ENCODE measurements at regions of chr1 and their contacts with region 1.

Region 1: GRCh38 chr1:200510228-200510623 is 100.4 kb upstream of the ZNF281 start:
- DNase-seq: peak; percentile 59 to 66 (median 63)
- H3K4me3 ChIP-seq: no peak overlapping the region
- H3K4me3 Mint-ChIP-seq: no peak overlapping the region
- H3K27ac ChIP-seq: no peak overlapping the region
- H3K27ac Mint-ChIP-seq: peak overlapping the region in 1 of 7 donors; percentile 37
- H3K4me1 ChIP-seq: no peaks in the 10 kb centered on the region
- H3K4me1 Mint-ChIP-seq: peaks cover 0 to 3% (median 0%) of the 10 kb centered on the region in 4 donors
- H3K27me3 ChIP-seq: no peaks in the 10 kb centered on the region
- H3K27me3 Mint-ChIP-seq: peaks cover 8 to 16% of the 10 kb centered on the region in 2 donors

Region 2: GRCh38 chr1:199684686-199685273 is 825.4 kb before region 1 on chr1:
- CTCF ChIA-PET with region 1: interaction called, 8 read pairs
- POLR2A ChIA-PET with region 1: no interaction called
- intact Hi-C with region 1: loop called (anchors 1 kb)
- DNase-seq: peak in 4 of 5 donors; percentile 23 to 34 (median 32)
- H3K4me3 ChIP-seq: no peak overlapping the region
- H3K4me3 Mint-ChIP-seq: no peak overlapping the region
- H3K27ac ChIP-seq: no peak overlapping the region
- H3K27ac Mint-ChIP-seq: no peak overlapping the region
- H3K4me1 ChIP-seq: no peaks in the 10 kb centered on the region
- H3K4me1 Mint-ChIP-seq: no peaks in the 10 kb centered on the region
- H3K27me3 ChIP-seq: no peaks in the 10 kb centered on the region
- H3K27me3 Mint-ChIP-seq: peaks cover 6 to 7% of the 10 kb centered on the region in 2 donors

Region 3: GRCh38 chr1:200288226-200288625 is 222.0 kb before region 1 on chr1:
- CTCF ChIA-PET with region 1: no interaction called
- POLR2A ChIA-PET with region 1: no interaction called
- intact Hi-C with region 1: no loop called
- DNase-seq: no peak
- H3K4me3 ChIP-seq: no peak overlapping the region
- H3K4me3 Mint-ChIP-seq: no peak overlapping the region
- H3K27ac ChIP-seq: no peak overlapping the region
- H3K27ac Mint-ChIP-seq: no peak overlapping the region
- H3K4me1 ChIP-seq: no peaks in the 10 kb centered on the region
- H3K4me1 Mint-ChIP-seq: no peaks in the 10 kb centered on the region
- H3K27me3 ChIP-seq: no peaks in the 10 kb centered on the region
- H3K27me3 Mint-ChIP-seq: peaks cover 0 to 2% of the 10 kb centered on the region in 2 donors

Region 4: DNA sequence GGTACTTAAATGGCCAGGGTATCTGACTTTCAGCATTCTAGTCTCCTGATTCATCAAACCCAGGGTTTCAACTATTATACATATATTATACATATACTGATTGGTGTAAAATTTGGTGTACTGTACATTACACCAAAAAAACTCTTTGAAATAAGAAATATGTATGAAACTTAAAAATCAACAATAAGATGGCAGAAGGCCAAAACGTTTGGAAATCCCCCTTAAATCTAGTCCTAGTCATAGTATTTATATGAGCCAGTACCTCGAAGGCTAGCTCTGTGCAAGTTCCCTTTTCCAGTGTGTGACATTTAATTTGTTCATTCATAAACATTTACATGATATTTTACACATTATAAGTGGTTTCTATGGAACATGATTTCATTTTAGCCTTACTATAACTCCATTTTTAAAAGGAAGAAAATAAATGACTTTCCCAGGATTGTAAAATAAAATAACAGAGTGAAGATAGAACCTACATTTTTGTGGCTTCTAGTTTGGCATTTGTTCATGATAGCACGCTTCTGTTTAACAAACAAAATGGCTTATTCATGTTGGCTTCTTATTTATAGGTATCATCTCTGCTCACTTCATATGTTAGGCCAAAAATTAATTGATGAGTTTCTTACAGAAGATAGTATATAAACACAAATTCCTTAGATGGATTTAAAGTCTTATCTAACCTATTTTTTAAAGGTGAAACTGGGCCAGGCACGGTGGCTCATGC is 81.6 kb before region 1 on chr1:
- CTCF ChIA-PET with region 1: no interaction called
- POLR2A ChIA-PET with region 1: no interaction called
- intact Hi-C with region 1: no loop called
- DNase-seq: no peak
- H3K4me3 ChIP-seq: no peak overlapping the region
- H3K4me3 Mint-ChIP-seq: no peak overlapping the region
- H3K27ac ChIP-seq: no peak overlapping the region
- H3K27ac Mint-ChIP-seq: peak overlapping the region in 1 of 7 donors; percentile 41
- H3K4me1 ChIP-seq: no peaks in the 10 kb centered on the region
- H3K4me1 Mint-ChIP-seq: no peaks in the 10 kb centered on the region
- H3K27me3 ChIP-seq: no peaks in the 10 kb centered on the region
- H3K27me3 Mint-ChIP-seq: no peaks in the 10 kb centered on the region

Region 5: DNA sequence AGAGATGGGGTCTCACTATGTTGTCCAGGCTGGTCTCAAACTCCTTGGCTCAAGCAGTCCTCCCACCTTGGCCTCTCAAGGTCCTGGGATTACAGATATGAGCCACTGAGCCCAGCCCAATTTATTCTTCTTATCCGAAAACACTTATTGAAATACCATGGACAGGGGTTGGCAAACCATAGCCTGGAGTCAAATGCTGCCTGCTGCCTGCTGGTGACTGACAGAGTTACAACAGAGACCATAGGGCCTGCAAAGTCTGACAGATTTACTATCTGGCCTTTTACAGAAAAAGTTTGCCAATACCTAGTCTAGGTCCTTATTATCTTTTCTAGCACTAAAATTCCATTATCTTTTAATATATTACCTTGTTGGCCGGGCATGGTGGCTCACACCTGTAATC is 13.3 kb before region 1 on chr1:
- CTCF ChIA-PET with region 1: interaction called, 41 read pairs
- POLR2A ChIA-PET with region 1: no interaction called
- intact Hi-C with region 1: no loop called
- DNase-seq: no peak
- H3K4me3 ChIP-seq: no peak overlapping the region
- H3K4me3 Mint-ChIP-seq: no peak overlapping the region
- H3K27ac ChIP-seq: no peak overlapping the region
- H3K27ac Mint-ChIP-seq: no peak overlapping the region
- H3K4me1 ChIP-seq: no peaks in the 10 kb centered on the region
- H3K4me1 Mint-ChIP-seq: no peaks in the 10 kb centered on the region
- H3K27me3 ChIP-seq: no peaks in the 10 kb centered on the region
- H3K27me3 Mint-ChIP-seq: peaks cover 10 to 20% of the 10 kb centered on the region in 2 donors

Region 6: DNA sequence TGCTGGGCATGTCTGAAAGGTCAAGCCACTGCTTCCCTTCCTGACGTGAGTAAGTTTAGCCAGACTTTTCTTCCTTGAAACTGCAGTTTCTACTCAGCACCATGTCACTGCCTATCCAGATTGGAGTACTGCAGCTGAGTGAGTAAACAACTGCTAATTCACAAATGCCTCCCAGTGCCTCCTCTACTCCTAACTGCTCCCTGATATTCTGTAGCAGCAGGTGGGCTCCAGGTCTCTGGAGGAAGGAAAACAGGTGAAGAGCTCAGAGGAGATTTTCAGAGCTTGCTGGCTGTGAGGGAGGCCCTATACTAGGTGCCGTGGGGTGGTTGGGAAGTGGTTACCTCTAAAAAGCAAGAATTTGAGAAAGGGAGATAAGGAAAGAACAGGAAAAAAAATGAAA is 13.9 kb after region 1 on chr1:
- CTCF ChIA-PET with region 1: interaction called, 13 read pairs
- POLR2A ChIA-PET with region 1: no interaction called
- intact Hi-C with region 1: no loop called
- DNase-seq: no peak
- H3K4me3 ChIP-seq: no peak overlapping the region
- H3K4me3 Mint-ChIP-seq: no peak overlapping the region
- H3K27ac ChIP-seq: no peak overlapping the region
- H3K27ac Mint-ChIP-seq: no peak overlapping the region
- H3K4me1 ChIP-seq: peaks cover 4% of the 10 kb centered on the region
- H3K4me1 Mint-ChIP-seq: peaks cover 0 to 5% (median under 1%) of the 10 kb centered on the region in 4 donors
- H3K27me3 ChIP-seq: no peaks in the 10 kb centered on the region
- H3K27me3 Mint-ChIP-seq: peaks cover 0 to 2% of the 10 kb centered on the region in 2 donors

Region 7: DNA sequence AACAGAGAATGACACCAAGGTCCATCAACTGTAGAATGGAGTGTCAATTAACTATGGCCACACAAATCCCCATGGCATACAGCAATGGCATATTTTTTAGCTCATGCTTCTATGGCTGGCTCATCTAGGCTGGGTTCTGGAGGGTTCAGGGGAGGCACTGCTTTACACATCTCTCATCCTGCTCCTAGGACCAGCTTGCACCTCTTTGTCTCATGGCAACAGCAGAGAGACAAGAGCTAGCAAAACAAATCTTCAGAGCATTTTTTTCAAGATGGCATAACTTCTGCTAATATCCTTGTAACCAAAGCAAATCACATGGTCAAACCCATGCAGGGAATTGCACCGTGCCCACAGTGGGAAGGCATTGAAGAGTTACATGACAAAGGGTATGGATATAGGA is 28.0 kb after region 1 on chr1:
- CTCF ChIA-PET with region 1: interaction called, 10 read pairs
- POLR2A ChIA-PET with region 1: no interaction called
- intact Hi-C with region 1: no loop called
- DNase-seq: no peak
- H3K4me3 ChIP-seq: no peak overlapping the region
- H3K4me3 Mint-ChIP-seq: no peak overlapping the region
- H3K27ac ChIP-seq: no peak overlapping the region
- H3K27ac Mint-ChIP-seq: no peak overlapping the region
- H3K4me1 ChIP-seq: no peaks in the 10 kb centered on the region
- H3K4me1 Mint-ChIP-seq: peaks cover 0 to 3% (median under 1%) of the 10 kb centered on the region in 4 donors
- H3K27me3 ChIP-seq: no peaks in the 10 kb centered on the region
- H3K27me3 Mint-ChIP-seq: peaks cover 0 to 2% of the 10 kb centered on the region in 2 donors